Left colon (tissue), 2 donors: ENCODE measurements at regions of chr13 and their contacts with region 1.

Region 1: DNA sequence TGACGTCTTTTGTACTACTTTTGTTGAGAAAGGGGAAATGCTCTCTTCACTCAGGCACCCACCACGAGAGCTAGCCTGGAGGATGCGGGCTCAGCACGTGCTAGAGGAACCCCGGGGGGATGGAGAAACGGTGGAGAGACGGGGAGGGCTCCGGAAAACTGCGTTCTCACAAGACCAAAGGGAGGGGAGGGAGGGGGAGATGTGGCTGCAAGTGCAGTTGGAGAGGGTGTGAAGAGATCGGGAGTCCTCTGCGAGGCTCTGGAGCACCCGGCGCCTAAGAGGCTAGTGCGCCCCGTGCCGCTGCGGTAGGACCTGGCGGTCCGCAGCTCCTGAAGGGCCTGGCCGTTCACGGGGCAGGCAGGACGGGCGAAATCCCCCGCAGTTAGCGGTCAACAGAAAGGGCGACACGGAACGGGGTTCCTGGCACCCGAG is 43.4 kb upstream of the XPO4 start:
- DNase-seq: peak; percentile 22 to 28
- ATAC-seq: no peak

Region 2: GRCh38 chr13:21137696-21138095 is 191.7 kb after region 1 on chr13:
- intact Hi-C with region 1: loop called in 1 of 2 experiments (anchors 10 kb)
- DNase-seq: no peak
- ATAC-seq: no peak